GM10248 (cell line): ENCODE measurements at regions of chrX and their contacts with region 1.

Region 1: DNA sequence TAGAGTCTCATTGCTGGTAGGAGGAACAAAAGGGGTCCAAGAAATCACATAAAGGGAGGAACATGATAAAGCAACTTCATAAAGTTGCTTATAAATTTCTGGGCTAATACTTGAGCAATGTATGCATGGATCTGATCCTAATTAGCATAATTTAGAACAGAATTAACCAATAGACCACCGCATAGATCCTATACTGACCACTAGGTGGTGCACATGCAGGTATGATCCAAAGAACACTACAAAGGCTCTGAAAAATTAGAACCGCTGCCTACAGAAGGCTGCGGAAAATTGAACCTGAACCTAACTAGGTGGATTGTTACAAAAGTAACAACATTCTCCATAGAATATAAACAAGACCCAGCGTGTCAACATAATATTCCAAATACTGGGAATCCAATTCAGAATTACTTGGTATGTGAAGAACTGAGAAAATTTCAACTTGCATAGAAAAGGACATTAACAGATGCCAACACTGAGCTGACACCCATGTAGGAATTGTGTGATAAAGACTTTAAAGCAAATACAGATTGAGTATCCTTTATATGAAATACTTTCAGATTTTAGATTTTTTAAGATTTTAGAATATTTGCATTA is 23.3 kb downstream of the BRCC3 start:
- DNase-seq: no peak
- CTCF ChIP-seq: peak; percentile 29

Region 2: GRCh38 chrX:155105919-155106318 is 11.4 kb after region 1 on chrX:
- CTCF ChIA-PET with region 1: interaction called, 16 read pairs
- POLR2A ChIA-PET with region 1: no interaction called
- DNase-seq: no peak
- CTCF ChIP-seq: no peak